ENCODE measurements at regions of chr19 and their contacts with region 1.

Region 1: GRCh38 chr19:1383311-1384084 is at the start of gene NDUFS7:
- DNase-seq: peak; percentile 96
- H3K4me3 ChIP-seq: peak within 1 kb of the TSS; percentile 96
- H3K27ac ChIP-seq: peak within 1 kb of the TSS; percentile 80
- H3K4me1 ChIP-seq: peaks cover 11% of the 10 kb centered on the region
- CTCF ChIP-seq: peak; percentile 63
- total RNA-seq, gene NDUFS7: 125 and 132 TPM in 2 replicates

Region 2: GRCh38 chr19:1355568-1356507 is 27.7 kb before region 1 on chr19:
- CTCF ChIA-PET with region 1: no interaction called
- POLR2A ChIA-PET with region 1: interaction called, 5 read pairs
- intact Hi-C with region 1: loop called (anchors 2 kb)
- DNase-seq: peak; percentile 32
- H3K4me3 ChIP-seq: peak overlapping the region; percentile 77
- H3K27ac ChIP-seq: no peak overlapping the region
- H3K4me1 ChIP-seq: peaks cover 23% of the 10 kb centered on the region
- CTCF ChIP-seq: no peak